Activated naive CD4-positive, alpha-beta T cell treated with anti-CD3 and anti-CD28 coated beads for 36 hours (primary cell): ENCODE measurements at regions of chr17 and their contacts with region 1.

Region 1: DNA sequence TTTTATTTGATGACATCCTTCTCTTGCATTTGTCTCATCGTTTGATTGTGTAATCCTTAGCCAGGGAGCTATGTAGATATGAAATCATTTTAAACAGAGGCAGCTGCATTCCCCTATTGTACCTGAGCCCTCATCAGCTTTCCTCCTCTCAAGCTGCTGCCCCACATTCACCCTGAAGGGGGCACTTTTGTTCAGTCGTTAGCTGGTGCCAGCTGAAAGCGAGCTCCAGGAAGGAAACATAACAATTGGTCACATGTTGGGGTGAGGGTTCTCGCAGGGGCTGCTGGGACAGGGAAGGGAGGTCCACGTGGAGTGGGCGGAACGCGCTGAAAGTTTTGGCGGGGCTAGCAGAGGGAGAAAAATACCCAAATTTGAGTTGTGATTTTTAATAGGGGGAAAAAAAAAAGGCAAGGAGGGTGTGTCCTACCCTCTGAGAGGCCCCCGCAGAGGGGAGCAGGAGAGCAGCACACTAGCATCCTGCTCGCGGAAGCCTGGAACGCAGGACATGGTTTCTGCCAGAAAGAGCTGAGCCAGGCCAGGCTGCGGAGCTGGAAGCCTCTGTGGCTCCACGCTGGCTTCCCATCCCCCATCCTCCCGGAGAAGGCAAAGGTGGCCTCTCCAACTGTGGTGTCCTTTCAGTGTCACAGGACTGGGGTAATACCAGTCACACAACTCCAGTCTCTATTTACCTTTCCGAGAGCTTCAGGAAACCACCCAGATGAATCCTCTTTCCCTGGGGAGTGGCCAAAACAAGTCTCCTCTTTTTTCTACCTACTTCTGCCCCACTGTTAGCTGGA is 8.5 kb upstream of the MSL1 start:
- DNase-seq: peak; percentile 98
- H3K4me3 Mint-ChIP-seq: peak overlapping the region; percentile 81
- H3K27ac Mint-ChIP-seq: peak overlapping the region; percentile 91
- H3K4me1 Mint-ChIP-seq: peaks cover 52% of the 10 kb centered on the region
- H3K27me3 Mint-ChIP-seq: no peaks in the 10 kb centered on the region

Region 2: DNA sequence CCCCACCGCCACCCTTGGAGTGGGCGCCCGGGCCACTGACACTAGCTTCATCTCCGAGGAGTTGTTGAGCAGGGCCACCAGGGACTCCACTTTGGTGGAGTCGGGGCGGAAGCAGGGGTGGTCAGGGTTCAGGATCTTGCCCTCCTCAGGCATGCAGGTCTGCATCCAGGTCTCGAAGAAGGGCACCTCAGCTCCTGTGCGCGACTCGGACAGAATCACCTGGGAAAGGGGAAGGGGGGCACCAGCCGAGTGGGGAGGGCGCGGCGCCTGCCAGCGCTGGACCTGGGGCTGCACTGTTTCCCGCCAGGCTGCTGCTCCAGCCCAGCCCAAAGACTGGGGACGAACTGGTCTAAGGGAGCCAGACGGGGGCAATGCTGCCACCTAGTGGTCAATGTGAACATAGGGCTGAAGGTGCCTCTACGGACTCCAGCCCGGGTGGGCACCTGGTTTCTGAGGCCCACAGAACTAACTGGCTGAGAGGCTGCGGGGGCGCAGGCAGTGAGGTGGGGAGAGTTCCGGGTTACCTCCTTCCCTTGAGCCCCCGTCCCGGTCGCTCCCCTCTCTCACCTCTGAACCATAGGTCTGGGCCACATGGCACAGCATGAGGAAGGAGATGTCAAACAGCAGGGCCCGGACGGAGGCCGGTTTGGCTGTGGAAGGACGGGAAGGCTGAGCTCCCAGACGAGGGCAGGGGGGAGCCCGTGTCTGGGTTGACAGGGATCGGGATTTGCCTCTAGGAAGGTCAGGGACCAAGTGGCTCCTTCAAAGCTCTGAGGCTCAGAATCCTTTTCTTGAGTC is 86.3 kb before region 1 on chr17:
- CTCF ChIA-PET with region 1: interaction called, 12 read pairs
- intact Hi-C with region 1: no loop called
- DNase-seq: peak; percentile 85
- H3K4me3 Mint-ChIP-seq: no peak overlapping the region
- H3K27ac Mint-ChIP-seq: no peak overlapping the region
- H3K4me1 Mint-ChIP-seq: peaks cover 17% of the 10 kb centered on the region
- H3K27me3 Mint-ChIP-seq: no peaks in the 10 kb centered on the region

Region 3: GRCh38 chr17:40086150-40087044 is 26.9 kb before region 1 on chr17:
- CTCF ChIA-PET with region 1: interaction called, 12 read pairs
- intact Hi-C with region 1: no loop called
- DNase-seq: peak; percentile 67
- H3K4me3 Mint-ChIP-seq: no peak overlapping the region
- H3K27ac Mint-ChIP-seq: no peak overlapping the region
- H3K4me1 Mint-ChIP-seq: no peaks in the 10 kb centered on the region
- H3K27me3 Mint-ChIP-seq: no peaks in the 10 kb centered on the region

Region 4: DNA sequence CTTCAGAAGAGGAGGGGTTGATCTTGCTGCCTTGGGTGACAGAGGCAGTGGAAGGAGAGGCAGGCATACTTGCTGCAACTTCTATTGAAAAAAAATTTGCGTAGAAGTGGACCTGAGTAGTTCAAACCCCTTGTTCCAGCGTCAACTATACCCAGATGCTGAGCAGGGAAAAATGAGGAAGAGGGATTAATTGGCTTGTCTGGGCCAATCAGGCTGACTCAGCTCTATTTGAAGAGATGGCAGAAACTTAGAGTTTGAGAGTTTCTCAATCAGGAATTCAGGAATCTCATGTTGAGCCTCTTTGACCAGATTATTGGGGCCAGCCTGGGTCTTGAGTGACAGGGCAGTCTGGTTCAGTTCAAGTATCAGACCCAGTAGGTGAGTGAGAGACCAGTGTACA is 44.7 kb after region 1 on chr17:
- CTCF ChIA-PET with region 1: interaction called, 31 read pairs
- intact Hi-C with region 1: loop called (anchors 5 kb)
- DNase-seq: no peak
- H3K4me3 Mint-ChIP-seq: no peak overlapping the region
- H3K27ac Mint-ChIP-seq: peak overlapping the region; percentile 39
- H3K4me1 Mint-ChIP-seq: peaks cover 33% of the 10 kb centered on the region
- H3K27me3 Mint-ChIP-seq: no peaks in the 10 kb centered on the region

Region 5: DNA sequence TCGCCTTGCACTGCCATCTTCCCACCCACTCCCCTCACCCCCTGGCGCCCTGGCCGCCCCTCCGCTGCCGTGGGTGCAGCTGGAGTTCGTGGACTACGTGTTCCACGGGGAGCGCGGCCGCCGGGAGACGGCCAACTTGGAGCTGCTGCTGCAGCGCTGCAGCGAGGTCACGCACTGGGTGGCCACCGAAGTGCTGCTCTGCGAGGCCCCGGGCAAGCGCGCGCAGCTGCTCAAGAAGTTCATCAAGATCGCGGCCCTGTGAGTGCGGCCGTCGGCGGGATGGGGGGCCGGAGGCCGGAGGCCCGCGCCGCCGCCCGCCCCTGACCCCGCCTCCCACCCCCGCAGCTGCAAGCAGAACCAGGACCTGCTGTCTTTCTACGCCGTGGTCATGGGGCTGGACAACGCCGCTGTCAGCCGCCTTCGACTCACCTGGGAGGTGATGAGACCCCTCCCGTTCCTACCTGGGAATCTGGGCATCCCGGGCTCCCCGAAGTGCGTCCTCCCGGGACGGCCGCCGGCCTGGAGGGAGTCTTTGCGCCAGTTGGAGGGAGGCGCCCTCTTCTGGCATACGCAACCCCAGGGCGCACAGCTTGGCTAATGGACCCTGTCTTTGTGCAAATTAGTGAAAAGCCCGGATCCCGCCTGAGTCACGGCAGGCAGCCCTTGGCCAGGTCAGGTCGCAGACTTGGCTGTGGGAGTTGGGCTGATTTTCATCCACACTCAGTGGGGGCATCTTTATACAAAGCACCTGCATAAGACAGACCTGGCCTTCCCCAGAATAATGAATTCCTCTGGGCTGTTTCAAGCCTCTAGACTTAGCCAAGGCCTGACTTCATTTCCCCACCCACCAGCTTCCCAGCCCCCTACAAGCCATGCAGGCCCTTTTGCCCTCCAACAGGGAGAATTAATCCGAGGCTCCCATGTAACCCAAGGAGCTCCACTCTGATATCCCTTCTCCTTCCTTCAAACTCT is 78.2 kb after region 1 on chr17:
- CTCF ChIA-PET with region 1: interaction called, 82 read pairs
- intact Hi-C with region 1: loop called (anchors 1 kb)
- DNase-seq: peak; percentile 79
- H3K4me3 Mint-ChIP-seq: peak overlapping the region; percentile 82
- H3K27ac Mint-ChIP-seq: no peak overlapping the region
- H3K4me1 Mint-ChIP-seq: peaks cover 7% of the 10 kb centered on the region
- H3K27me3 Mint-ChIP-seq: no peaks in the 10 kb centered on the region

Region 6: DNA sequence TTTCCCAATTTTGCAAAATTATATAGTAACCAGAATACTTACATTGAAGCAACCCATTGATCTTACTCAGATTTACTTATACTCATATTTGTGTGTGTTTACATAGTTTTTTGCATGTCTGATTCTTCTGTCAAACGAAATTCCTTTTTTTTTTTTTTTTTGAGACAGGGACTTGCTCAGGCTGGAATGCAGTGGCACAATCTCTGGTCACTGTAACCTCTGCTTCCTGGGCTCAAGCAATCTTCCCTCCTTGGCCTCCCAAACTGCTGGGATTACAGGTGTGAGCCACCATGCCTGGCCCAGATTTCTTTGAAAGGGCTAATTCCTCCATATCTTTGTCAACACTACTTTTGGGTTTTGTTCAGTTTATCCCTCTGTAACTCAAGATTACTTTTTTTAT is 274.4 kb after region 1 on chr17:
- CTCF ChIA-PET with region 1: no interaction called
- intact Hi-C with region 1: no loop called
- DNase-seq: no peak
- H3K4me3 Mint-ChIP-seq: no peak overlapping the region
- H3K27ac Mint-ChIP-seq: no peak overlapping the region
- H3K4me1 Mint-ChIP-seq: no peaks in the 10 kb centered on the region
- H3K27me3 Mint-ChIP-seq: no peaks in the 10 kb centered on the region